ENCODE measurements at regions of chr16 and their contacts with region 1.

Region 1: GRCh38 chr16:84062734-84063640 is 20.4 kb upstream of the SLC38A8 start:
- DNase-seq: peak; percentile 71
- H3K4me3 Mint-ChIP-seq: no peak overlapping the region
- H3K27ac Mint-ChIP-seq: peak overlapping the region; percentile 56
- H3K4me1 Mint-ChIP-seq: peaks cover 2% of the 10 kb centered on the region
- H3K27me3 Mint-ChIP-seq: no peaks in the 10 kb centered on the region

Region 2: GRCh38 chr16:83826146-83826913 is 236.7 kb before region 1 on chr16:
- CTCF ChIA-PET with region 1: interaction called, 13 read pairs
- DNase-seq: peak; percentile 86
- H3K4me3 Mint-ChIP-seq: no peak overlapping the region
- H3K27ac Mint-ChIP-seq: no peak overlapping the region
- H3K4me1 Mint-ChIP-seq: peaks cover 5% of the 10 kb centered on the region
- H3K27me3 Mint-ChIP-seq: peaks cover 25% of the 10 kb centered on the region

Region 3: DNA sequence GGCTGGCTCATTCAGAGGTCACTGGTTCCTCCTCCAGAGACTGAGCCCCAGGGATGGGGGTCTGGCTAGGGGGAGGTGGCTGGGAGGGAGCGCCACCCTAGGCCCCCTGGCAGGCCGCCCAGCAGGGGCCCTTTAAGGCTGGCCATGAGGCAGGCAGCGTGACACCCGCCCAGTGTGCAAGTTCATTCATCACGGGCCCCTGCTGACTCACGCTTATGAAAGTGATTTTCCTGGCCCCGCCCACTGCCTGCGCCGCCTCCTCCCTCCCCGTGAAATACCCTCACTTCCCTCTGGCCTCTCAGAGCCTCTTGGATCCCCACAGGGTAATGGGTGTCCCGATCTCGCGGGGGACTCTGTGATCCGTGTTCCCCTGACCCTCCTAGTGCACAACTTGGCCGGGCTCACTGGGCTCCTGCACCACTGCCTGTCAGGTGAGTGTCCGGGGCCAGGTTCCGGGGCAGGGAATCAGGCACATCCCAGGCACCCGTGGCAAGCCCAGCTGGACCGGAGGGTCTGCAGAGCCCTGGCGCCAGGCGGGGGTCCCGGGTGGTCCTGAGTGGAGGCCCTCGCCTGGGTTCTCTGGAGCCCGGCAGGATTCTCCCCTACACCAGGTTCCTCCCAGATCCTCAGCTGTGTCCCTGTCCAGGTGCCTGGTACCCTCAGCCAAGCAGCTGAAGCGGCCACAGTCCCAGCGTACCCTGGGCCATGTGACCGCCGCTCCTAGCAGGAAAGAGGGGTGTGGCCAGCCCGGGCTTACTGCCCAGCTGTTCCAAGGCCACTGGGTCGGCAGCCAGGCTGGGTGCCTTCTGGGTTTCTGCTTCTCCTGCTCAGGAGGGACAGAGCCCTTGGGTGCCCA is 109.8 kb before region 1 on chr16 and contains the start of gene OSGIN1:
- CTCF ChIA-PET with region 1: interaction called, 54 read pairs
- DNase-seq: peak; percentile 85
- H3K4me3 Mint-ChIP-seq: peak within 1 kb of the TSS; percentile 67
- H3K27ac Mint-ChIP-seq: no peak within 1 kb of the TSS
- H3K4me1 Mint-ChIP-seq: peaks cover 20% of the 10 kb centered on the region
- H3K27me3 Mint-ChIP-seq: peaks cover 43% of the 10 kb centered on the region